PC-9 (cell line): ENCODE measurements at regions of chr12 and their contacts with region 1.

Region 1: DNA sequence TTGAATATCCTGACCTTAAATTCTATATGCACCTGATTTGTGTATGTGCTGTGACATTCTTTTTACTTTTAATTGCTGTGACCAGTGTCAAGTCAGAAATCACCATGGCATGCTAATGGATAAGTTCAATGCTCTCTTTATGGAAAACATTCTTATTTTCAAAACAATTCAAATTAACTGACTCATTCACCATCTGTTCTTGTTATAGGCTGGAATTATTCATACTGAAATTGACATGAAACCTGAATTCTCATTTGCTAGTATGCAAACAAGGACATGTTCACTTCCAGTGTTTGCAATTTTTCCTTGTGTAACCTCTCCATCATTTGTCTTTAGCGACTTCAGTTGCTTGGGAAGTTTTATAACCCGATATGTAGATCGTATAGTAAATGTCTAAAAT is at the start of gene TAS2R30:
- DNase-seq: no peak
- H3K4me3 ChIP-seq: no peak within 1 kb of the TSS
- H3K27ac ChIP-seq: no peak within 1 kb of the TSS
- H3K4me1 ChIP-seq: no peaks in the 10 kb centered on the region
- H3K27me3 ChIP-seq: no peaks in the 10 kb centered on the region
- CTCF ChIP-seq: no peak
- total RNA-seq, gene TAS2R30: 2.9 and 3.1 TPM in 2 replicates

Region 2: DNA sequence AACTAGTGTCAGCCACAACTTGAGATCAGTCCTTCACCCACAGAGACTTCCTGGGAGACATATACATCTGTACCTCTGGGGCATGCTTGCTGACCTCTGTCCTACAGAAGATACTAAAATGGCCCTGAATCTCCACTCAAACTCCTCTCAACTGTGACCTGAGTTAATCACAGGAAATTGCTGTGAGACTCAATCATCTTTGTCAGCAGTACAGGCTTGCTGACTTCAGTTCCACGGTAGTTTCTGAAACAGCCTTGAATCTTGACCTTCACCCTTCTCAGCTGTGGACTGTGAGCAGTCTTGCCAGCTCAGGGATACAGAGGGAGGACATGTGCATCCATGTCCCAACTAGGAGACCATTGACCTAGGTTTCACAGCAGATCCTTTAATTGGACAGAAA is 679.8 kb before region 1 on chr12:
- CTCF ChIA-PET with region 1: no interaction called
- POLR2A ChIA-PET with region 1: no interaction called
- intact Hi-C with region 1: no loop called
- DNase-seq: no peak
- H3K4me3 ChIP-seq: no peak overlapping the region
- H3K27ac ChIP-seq: no peak overlapping the region
- H3K4me1 ChIP-seq: 0 out of 2 replicates have a peak, but pooled peaks cover 4% of the 10 kb centered on the region
- H3K27me3 ChIP-seq: no peaks in the 10 kb centered on the region
- CTCF ChIP-seq: no peak

Region 3: DNA sequence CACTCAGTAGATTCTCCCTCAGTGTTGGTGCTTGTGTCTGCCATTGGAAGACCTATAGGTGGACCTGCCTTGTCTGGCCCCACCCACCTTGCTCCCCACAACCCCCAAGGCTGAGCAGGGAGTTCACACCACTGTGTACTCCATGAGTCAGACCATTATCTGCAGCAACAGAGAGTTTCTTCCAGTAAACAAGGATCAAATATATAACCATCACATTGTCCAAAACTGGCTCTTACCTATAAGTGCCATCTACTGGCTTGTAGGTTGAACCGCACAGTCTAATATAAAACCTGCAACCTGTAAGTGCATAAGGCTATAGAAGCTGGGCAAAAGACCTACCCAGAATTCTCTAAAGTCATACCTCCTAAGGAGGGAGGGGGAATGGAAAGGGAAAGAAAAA is 232.9 kb before region 1 on chr12:
- CTCF ChIA-PET with region 1: no interaction called
- POLR2A ChIA-PET with region 1: no interaction called
- intact Hi-C with region 1: no loop called
- DNase-seq: no peak
- H3K4me3 ChIP-seq: no peak overlapping the region
- H3K27ac ChIP-seq: no peak overlapping the region
- H3K4me1 ChIP-seq: no peaks in the 10 kb centered on the region
- H3K27me3 ChIP-seq: no peaks in the 10 kb centered on the region
- CTCF ChIP-seq: no peak; the same call in 1 of the 2 replicates

Region 4: DNA sequence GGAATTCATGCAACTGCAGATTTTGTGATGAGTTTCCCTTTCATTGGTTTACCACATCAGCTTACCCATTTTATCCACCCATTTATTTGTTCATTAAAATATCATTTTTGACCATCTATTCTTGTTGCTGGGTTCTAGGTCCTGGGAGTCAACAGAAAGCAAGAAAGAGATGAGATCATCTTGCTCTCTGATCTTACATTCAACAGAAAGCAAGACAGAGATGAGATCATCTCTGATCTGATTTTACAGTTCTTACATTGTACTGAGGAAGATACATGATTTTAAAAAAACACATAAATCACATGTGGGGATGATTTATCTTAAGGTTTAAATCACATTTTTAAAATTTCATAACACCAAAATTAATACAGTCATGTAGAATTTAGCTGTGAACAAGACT is 74.5 kb before region 1 on chr12:
- CTCF ChIA-PET with region 1: no interaction called
- POLR2A ChIA-PET with region 1: no interaction called
- intact Hi-C with region 1: loop called (anchors 10 kb)
- DNase-seq: no peak
- H3K4me3 ChIP-seq: no peak overlapping the region
- H3K27ac ChIP-seq: no peak overlapping the region
- H3K4me1 ChIP-seq: no peaks in the 10 kb centered on the region
- H3K27me3 ChIP-seq: no peaks in the 10 kb centered on the region
- CTCF ChIP-seq: no peak

Region 5: GRCh38 chr12:11081987-11082386 is 52.3 kb before region 1 on chr12:
- CTCF ChIA-PET with region 1: no interaction called
- POLR2A ChIA-PET with region 1: no interaction called
- intact Hi-C with region 1: loop called (anchors 5 kb)
- DNase-seq: no peak
- H3K4me3 ChIP-seq: no peak overlapping the region
- H3K27ac ChIP-seq: no peak overlapping the region
- H3K4me1 ChIP-seq: no peaks in the 10 kb centered on the region
- H3K27me3 ChIP-seq: no peaks in the 10 kb centered on the region
- CTCF ChIP-seq: no peak